B cell (primary cell): ENCODE measurements at regions of chr12 and their contacts with region 1.

Region 1: GRCh38 chr12:9869307-9870161 is at the start of gene CLEC2B:
- DNase-seq: peak; percentile 76
- ATAC-seq: peak; percentile 66
- H3K4me3 ChIP-seq: peak within 1 kb of the TSS; percentile 51 to 97 (median 66)
- H3K4me3 Mint-ChIP-seq: peak within 1 kb of the TSS; percentile 92
- H3K27ac ChIP-seq: peak within 1 kb of the TSS; percentile 89 to 90
- H3K27ac Mint-ChIP-seq: peak within 1 kb of the TSS; percentile 99
- H3K4me1 ChIP-seq: peaks cover 14 to 18% of the 10 kb centered on the region in 2 donors
- H3K4me1 Mint-ChIP-seq: peaks cover 41% of the 10 kb centered on the region
- H3K27me3 ChIP-seq: no peaks in the 10 kb centered on the region
- H3K27me3 Mint-ChIP-seq: no peaks in the 10 kb centered on the region
- CTCF ChIP-seq: no peak
- total RNA-seq, gene CLEC2B: 30.5 and 31.6 TPM in 2 replicates

Region 2: GRCh38 chr12:9858135-9858534 is 11.4 kb before region 1 on chr12:
- CTCF ChIA-PET with region 1: no interaction called
- POLR2A ChIA-PET with region 1: no interaction called
- intact Hi-C with region 1: loop called (anchors 1 kb)
- DNase-seq: no peak
- ATAC-seq: no peak
- H3K4me3 ChIP-seq: no peak overlapping the region
- H3K4me3 Mint-ChIP-seq: no peak overlapping the region
- H3K27ac ChIP-seq: no peak overlapping the region
- H3K27ac Mint-ChIP-seq: no peak overlapping the region
- H3K4me1 ChIP-seq: peaks cover 0 to 7% of the 10 kb centered on the region in 2 donors
- H3K4me1 Mint-ChIP-seq: peaks cover 14% of the 10 kb centered on the region
- H3K27me3 ChIP-seq: no peaks in the 10 kb centered on the region
- H3K27me3 Mint-ChIP-seq: no peaks in the 10 kb centered on the region
- CTCF ChIP-seq: no peak

Region 3: GRCh38 chr12:9992296-9992695 is 122.8 kb after region 1 on chr12:
- CTCF ChIA-PET with region 1: no interaction called
- POLR2A ChIA-PET with region 1: no interaction called
- intact Hi-C with region 1: no loop called
- DNase-seq: peak; percentile 33
- ATAC-seq: no peak
- H3K4me3 ChIP-seq: peak overlapping the region in 1 of 5 experiments; percentile 1
- H3K4me3 Mint-ChIP-seq: peak overlapping the region; percentile 40
- H3K27ac ChIP-seq: no peak overlapping the region
- H3K27ac Mint-ChIP-seq: no peak overlapping the region
- H3K4me1 ChIP-seq: peaks cover 5 to 16% of the 10 kb centered on the region in 2 donors
- H3K4me1 Mint-ChIP-seq: peaks cover 12% of the 10 kb centered on the region
- H3K27me3 ChIP-seq: peaks cover 0 to 21% (median 7%) of the 10 kb centered on the region in 4 experiments
- H3K27me3 Mint-ChIP-seq: peaks cover 72% of the 10 kb centered on the region
- CTCF ChIP-seq: no peak